Activated CD4-positive, alpha-beta memory T cell treated with anti-CD3 and anti-CD28 coated beads for 36 hours (primary cell): ENCODE measurements at regions of chr6 and their contacts with region 1.

Region 1: DNA sequence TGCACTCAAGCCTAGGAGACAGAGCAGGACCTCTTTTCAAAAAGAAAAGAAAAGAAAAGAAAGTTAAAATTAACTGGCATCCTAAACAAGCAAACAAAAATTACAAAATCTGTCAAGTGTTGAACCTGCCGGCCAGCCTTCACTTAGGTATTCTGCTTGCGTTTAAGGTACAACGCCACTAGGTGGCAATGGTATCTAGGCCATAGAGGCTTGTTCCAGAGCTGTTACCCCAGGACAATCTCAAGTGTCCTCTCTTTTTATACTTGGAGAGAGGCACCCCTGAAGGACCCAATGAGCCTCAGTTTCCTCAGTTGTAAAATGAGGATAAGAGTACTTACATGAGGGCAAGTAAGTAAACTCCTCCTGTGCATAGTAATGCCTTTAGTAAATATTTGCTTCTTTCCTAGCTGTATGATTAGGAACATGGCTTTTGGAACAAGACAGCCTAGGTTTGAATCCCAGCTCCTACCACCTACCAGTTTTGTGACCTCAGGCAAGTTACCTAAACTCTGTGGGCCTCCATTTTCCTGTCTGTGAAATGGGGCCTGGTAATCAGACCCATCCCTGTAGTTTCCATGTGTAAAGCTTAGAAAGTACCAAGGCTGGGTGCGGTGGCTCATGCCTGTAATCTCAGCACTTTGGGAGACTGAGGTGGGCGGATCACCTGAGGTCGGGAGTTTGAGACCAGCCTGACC is 5.8 kb upstream of the PACSIN1 start:
- DNase-seq: peak; percentile 59
- H3K4me3 Mint-ChIP-seq: no peak overlapping the region
- H3K27ac Mint-ChIP-seq: no peak overlapping the region
- H3K4me1 Mint-ChIP-seq: no peaks in the 10 kb centered on the region
- H3K27me3 Mint-ChIP-seq: peaks cover 9% of the 10 kb centered on the region

Region 2: GRCh38 chr6:34476447-34476846 is 16.4 kb after region 1 on chr6:
- CTCF ChIA-PET with region 1: interaction called, 14 read pairs
- POLR2A ChIA-PET with region 1: no interaction called
- intact Hi-C with region 1: no loop called
- DNase-seq: no peak
- H3K4me3 Mint-ChIP-seq: no peak overlapping the region
- H3K27ac Mint-ChIP-seq: no peak overlapping the region
- H3K4me1 Mint-ChIP-seq: no peaks in the 10 kb centered on the region
- H3K27me3 Mint-ChIP-seq: no peaks in the 10 kb centered on the region

Region 3: DNA sequence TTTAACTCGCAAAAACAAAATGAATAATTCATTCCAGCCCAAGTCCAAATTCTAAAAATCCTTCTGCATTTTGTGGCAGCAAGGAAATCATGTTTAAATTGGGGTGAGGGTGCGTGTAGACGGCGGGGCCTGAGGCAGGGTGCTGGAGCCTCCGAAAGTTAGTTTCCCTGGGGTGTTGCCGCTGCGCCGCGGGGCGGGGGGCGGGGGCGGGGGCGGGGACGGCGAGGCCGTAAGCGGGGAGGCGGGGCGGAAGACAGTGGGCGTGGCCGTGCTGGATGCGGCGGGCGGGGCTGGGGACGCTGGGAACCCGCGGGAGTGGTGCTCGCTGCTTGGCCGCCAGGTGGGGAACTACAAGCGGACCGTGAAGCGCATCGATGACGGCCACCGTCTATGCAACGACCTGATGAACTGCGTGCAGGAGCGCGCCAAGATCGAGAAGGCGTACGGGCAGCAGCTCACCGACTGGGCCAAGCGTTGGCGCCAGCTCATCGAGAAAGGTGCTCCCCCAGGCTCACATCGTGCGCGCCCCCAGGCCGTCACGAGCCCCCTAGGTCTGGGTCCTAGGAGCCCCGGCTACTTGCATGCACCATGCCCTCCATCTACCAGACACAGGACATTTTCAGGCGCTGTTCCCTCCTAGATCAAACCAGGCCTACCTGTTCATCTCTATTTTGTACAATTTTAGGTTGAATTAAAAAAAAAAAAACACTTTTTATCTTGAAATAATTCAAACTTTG is 67.1 kb after region 1 on chr6:
- CTCF ChIA-PET with region 1: interaction called, 9 read pairs
- POLR2A ChIA-PET with region 1: no interaction called
- intact Hi-C with region 1: loop called (anchors 2 kb)
- DNase-seq: peak; percentile 97
- H3K4me3 Mint-ChIP-seq: no peak overlapping the region
- H3K27ac Mint-ChIP-seq: no peak overlapping the region
- H3K4me1 Mint-ChIP-seq: peaks cover 7% of the 10 kb centered on the region
- H3K27me3 Mint-ChIP-seq: no peaks in the 10 kb centered on the region

Region 4: GRCh38 chr6:34627296-34627695 is 167.2 kb after region 1 on chr6:
- CTCF ChIA-PET with region 1: no interaction called
- POLR2A ChIA-PET with region 1: no interaction called
- intact Hi-C with region 1: no loop called
- DNase-seq: no peak
- H3K4me3 Mint-ChIP-seq: no peak overlapping the region
- H3K27ac Mint-ChIP-seq: no peak overlapping the region
- H3K4me1 Mint-ChIP-seq: peaks cover 8% of the 10 kb centered on the region
- H3K27me3 Mint-ChIP-seq: no peaks in the 10 kb centered on the region